CD14-positive monocyte (primary cell): ENCODE measurements at regions of chr10 and their contacts with region 1.

Region 1: GRCh38 chr10:61903221-61903927 is 1.9 kb downstream of the ARID5B start:
- DNase-seq: peak; percentile 46 to 67 (median 51)
- H3K4me3 ChIP-seq: peak overlapping the region; percentile 83 to 96 (median 94)
- H3K4me3 Mint-ChIP-seq: peak overlapping the region; percentile 88 to 96
- H3K27ac ChIP-seq: peak overlapping the region; percentile 96 to 100
- H3K27ac Mint-ChIP-seq: peak overlapping the region; percentile 93 to 100 (median 99)
- H3K4me1 ChIP-seq: peaks cover 34 to 36% of the 10 kb centered on the region in 2 donors
- H3K4me1 Mint-ChIP-seq: peaks cover 30% of the 10 kb centered on the region
- H3K27me3 ChIP-seq: no peaks in the 10 kb centered on the region
- H3K27me3 Mint-ChIP-seq: no peaks in the 10 kb centered on the region
- CTCF ChIP-seq: peak; percentile 21

Region 2: DNA sequence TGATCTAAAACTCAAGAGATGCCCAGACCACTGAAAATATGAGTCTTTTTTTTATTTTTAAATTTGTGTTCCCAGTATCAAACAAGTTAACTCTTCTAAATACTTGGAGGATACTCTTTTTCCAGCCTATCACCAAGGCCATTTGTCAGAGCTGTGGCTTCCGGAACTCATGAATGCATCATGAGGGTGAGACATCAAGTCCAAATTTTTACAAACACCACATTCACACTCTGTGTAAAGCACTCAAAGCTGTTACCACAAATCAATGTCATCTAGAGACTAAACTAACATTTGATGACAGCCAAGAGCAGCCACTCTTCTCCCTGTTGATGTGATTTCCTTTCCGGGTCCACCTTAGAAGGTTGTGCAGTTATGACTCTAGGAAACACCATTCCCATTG is 45.6 kb before region 1 on chr10:
- intact Hi-C with region 1: no loop called
- DNase-seq: no peak
- H3K4me3 ChIP-seq: no peak overlapping the region
- H3K4me3 Mint-ChIP-seq: no peak overlapping the region
- H3K27ac ChIP-seq: no peak overlapping the region
- H3K27ac Mint-ChIP-seq: no peak overlapping the region
- H3K4me1 ChIP-seq: no peaks in the 10 kb centered on the region
- H3K4me1 Mint-ChIP-seq: no peaks in the 10 kb centered on the region
- H3K27me3 ChIP-seq: no peaks in the 10 kb centered on the region
- H3K27me3 Mint-ChIP-seq: peaks cover 0 to 5% (median 0%) of the 10 kb centered on the region in 3 donors
- CTCF ChIP-seq: no peak

Region 3: DNA sequence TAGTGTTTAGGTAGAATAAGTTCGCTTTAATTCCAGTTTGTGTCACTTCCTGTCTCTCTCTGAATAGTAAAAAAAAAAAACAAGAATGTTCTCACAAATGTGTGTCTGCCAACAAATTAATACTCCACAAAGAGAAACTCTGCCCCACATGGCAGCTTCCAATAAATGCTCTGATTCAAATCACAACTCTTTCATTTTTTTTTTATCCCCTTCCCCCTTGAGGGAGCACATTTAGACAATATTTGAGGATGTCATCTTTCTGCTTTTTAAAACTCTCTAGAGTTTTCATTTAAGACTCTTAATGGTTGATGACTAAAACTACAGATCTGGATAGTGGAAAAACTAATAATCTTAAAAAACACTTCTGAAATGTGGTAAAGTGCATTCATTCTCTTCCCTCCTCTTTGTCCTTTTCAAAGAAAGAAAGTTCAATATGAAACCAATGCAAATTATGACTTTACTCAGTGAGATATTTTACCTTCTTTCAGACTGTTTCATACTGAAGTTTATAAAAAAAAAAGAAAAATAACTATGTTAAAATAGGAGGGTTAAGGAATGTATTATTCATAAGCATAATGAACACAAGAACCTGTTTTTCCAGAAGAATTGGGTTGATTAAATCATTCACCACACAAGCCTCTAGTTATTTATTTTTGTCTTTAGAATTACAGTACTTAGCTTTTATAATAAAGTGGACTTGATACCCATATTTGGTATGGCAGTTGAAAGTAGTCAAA is 40.5 kb after region 1 on chr10:
- intact Hi-C with region 1: loop called (anchors 2 to 5 kb)
- DNase-seq: peak in 1 of 3 donors; percentile 40
- H3K4me3 ChIP-seq: peak overlapping the region in 1 of 3 experiments; percentile 27
- H3K4me3 Mint-ChIP-seq: no peak overlapping the region
- H3K27ac ChIP-seq: peak overlapping the region in 1 of 2 donors; percentile 90
- H3K27ac Mint-ChIP-seq: peak overlapping the region in 6 of 7 donors; percentile 8 to 98 (median 91)
- H3K4me1 ChIP-seq: peaks cover 36 to 61% of the 10 kb centered on the region in 2 donors
- H3K4me1 Mint-ChIP-seq: peaks cover 49% of the 10 kb centered on the region
- H3K27me3 ChIP-seq: no peaks in the 10 kb centered on the region
- H3K27me3 Mint-ChIP-seq: no peaks in the 10 kb centered on the region
- CTCF ChIP-seq: no peak

Region 4: DNA sequence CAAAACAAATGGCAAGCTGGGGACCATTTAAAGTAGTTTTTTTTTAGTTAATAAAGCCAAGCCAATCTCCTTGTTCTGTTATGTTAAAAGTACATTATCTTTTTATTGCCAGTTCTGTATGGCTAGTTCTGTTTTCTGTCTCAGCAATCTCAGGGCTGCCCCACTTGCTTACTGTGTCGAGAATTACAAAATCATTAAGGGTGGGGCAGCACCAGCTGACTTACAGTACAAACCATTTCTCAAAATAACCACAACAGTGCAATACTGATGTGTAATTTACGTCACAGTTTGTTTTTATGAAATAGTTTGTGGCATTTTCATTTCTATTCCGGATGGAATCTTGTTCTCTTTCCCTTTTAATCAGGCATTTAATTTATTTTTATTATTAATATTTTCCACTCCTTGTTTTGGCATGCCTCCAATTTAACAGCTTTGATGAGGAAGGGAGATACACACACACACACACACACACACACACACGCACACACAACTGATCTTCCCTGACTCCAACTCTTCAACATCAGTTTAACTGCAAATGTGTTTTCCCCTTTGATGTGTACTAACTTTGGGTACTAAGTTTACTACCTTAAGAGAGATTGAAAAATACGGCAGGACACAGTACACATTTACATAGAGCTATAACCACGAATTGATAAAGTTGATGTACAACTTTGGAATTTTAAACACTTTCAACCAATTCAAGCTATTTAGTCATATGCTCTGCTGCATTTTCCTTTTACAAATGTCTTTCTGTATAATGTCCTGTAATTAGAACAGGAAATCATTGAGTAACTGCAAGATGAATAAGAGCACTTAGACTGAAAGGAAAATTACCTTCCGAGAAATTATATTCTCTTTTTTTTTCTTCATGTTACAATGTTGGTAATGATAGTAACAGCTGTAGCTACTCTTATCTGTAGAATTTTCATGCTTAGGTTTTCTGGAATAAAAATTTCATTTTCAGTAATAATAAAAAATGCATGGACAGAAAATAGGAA is 89.6 kb after region 1 on chr10:
- intact Hi-C with region 1: loop called (anchors 2 to 5 kb)
- DNase-seq: peak; percentile 91 to 96 (median 96)
- H3K4me3 ChIP-seq: peak overlapping the region; percentile 34 to 75 (median 61)
- H3K4me3 Mint-ChIP-seq: peak overlapping the region; percentile 14 to 77
- H3K27ac ChIP-seq: peak overlapping the region; percentile 69 to 98
- H3K27ac Mint-ChIP-seq: peak overlapping the region; percentile 92 to 100 (median 99)
- H3K4me1 ChIP-seq: peaks cover 26 to 40% of the 10 kb centered on the region in 2 donors
- H3K4me1 Mint-ChIP-seq: peaks cover 42% of the 10 kb centered on the region
- H3K27me3 ChIP-seq: no peaks in the 10 kb centered on the region
- H3K27me3 Mint-ChIP-seq: peaks cover 0 to 7% (median 0%) of the 10 kb centered on the region in 3 donors
- CTCF ChIP-seq: no peak

Region 5: DNA sequence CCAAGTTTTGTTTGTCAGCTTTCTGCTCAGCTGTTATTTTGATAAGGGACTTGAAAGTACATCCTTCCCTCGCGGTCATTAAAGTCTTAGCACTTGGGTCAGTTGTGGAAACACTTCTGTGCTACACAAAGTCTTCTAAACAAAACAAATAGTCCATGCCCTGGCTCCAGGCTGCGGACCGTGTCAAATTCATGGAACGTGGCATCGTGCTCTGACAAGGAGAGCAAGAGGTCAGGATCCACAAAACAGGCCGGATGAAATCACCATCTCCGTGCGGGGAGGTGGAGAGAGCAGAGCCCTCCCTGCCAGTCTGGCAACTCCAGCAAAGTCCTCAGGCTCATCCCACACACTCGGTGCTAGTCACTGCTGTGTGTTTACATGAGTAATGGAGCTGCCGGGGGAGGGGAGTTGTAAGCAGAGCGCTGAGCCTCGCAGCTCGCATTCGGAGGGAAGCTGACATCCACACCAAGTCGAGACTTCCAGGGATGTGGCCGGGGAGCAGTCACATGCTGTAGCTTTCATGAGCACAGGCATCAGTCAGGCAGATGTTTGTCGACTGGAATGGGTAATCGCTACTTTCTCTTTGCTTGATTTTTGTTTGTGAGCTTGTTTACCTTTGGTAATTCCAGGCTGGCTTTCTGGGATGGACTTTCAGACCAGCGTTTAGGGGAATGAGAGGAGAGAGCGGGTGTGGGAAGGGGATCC is 145.7 kb after region 1 on chr10:
- intact Hi-C with region 1: loop called in 1 of 2 experiments (anchors 5 kb)
- DNase-seq: peak in 1 of 3 donors; percentile 29
- H3K4me3 ChIP-seq: no peak overlapping the region
- H3K4me3 Mint-ChIP-seq: peak overlapping the region in 1 of 2 donors; percentile 32
- H3K27ac ChIP-seq: no peak overlapping the region
- H3K27ac Mint-ChIP-seq: peak overlapping the region in 4 of 7 donors; percentile 15 to 80 (median 53)
- H3K4me1 ChIP-seq: peaks cover 55 to 63% of the 10 kb centered on the region in 2 donors
- H3K4me1 Mint-ChIP-seq: peaks cover 84% of the 10 kb centered on the region
- H3K27me3 ChIP-seq: no peaks in the 10 kb centered on the region
- H3K27me3 Mint-ChIP-seq: peaks cover 0 to 2% (median 0%) of the 10 kb centered on the region in 3 donors
- CTCF ChIP-seq: no peak

Region 6: GRCh38 chr10:62153191-62153590 is 249.8 kb after region 1 on chr10:
- intact Hi-C with region 1: loop called in 1 of 2 experiments (anchors 10 kb)
- DNase-seq: peak; percentile 71 to 86 (median 85)
- H3K4me3 ChIP-seq: no peak overlapping the region
- H3K4me3 Mint-ChIP-seq: no peak overlapping the region
- H3K27ac ChIP-seq: no peak overlapping the region
- H3K27ac Mint-ChIP-seq: peak overlapping the region in 6 of 7 donors; percentile 45 to 86 (median 57)
- H3K4me1 ChIP-seq: peaks cover 10 to 12% of the 10 kb centered on the region in 2 donors
- H3K4me1 Mint-ChIP-seq: peaks cover 16% of the 10 kb centered on the region
- H3K27me3 ChIP-seq: no peaks in the 10 kb centered on the region
- H3K27me3 Mint-ChIP-seq: peaks cover 0 to 2% (median 0%) of the 10 kb centered on the region in 3 donors
- CTCF ChIP-seq: no peak

Region 7: DNA sequence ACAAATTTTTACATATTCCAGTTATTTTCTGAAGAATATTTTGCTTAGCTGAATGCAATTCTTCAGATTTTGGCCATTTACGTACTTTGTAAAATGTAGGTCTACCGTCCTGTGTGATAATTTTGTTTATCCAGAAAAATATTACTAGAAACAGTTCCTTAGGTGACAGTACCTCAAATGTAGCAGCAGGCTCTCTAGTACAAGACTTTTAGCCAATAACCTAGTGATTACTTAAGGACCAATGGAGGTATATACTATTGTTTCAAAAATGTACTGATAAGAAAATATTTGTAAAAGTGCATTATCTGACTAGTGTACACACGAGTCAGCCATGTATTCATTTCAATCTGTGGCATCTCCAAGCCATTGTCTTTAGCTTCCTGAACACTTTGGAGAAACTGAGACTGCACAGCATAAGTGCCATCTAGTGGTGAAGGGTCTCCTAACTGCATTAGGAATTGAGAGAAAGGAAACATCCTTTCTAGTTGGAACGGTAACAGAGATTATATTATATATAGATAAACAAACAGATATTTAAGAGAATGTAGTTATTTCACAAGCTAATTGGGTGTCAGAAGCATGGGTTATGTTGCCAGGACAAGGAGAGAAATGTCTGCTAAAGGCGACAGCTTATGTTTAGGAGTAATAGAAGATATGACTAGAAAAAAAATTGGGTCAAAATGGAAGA is 341.6 kb after region 1 on chr10:
- intact Hi-C with region 1: loop called (anchors 5 to 10 kb)
- DNase-seq: peak in 2 of 3 donors; percentile 69 to 70
- H3K4me3 ChIP-seq: peak overlapping the region in 1 of 3 experiments; percentile 77
- H3K4me3 Mint-ChIP-seq: no peak overlapping the region
- H3K27ac ChIP-seq: peak overlapping the region in 1 of 2 donors; percentile 80
- H3K27ac Mint-ChIP-seq: peak overlapping the region in 6 of 7 donors; percentile 15 to 67 (median 50)
- H3K4me1 ChIP-seq: peaks cover 24 to 36% of the 10 kb centered on the region in 2 donors
- H3K4me1 Mint-ChIP-seq: peaks cover 28% of the 10 kb centered on the region
- H3K27me3 ChIP-seq: no peaks in the 10 kb centered on the region
- H3K27me3 Mint-ChIP-seq: peaks cover 0 to 2% (median 0%) of the 10 kb centered on the region in 3 donors
- CTCF ChIP-seq: peak; percentile 90